Brain microvascular endothelial cell (primary cell): ENCODE measurements at regions of chr7 and their contacts with region 1.

Region 1: GRCh38 chr7:123865517-123866117 is 20.6 kb downstream of the HYAL4 start:
- DNase-seq: peak; percentile 76
- H3K4me3 ChIP-seq: no peak overlapping the region
- H3K27ac ChIP-seq: peak overlapping the region; percentile 21
- H3K27me3 ChIP-seq: no peaks in the 10 kb centered on the region
- CTCF ChIP-seq: peak; percentile 68

Region 2: GRCh38 chr7:123624527-123625183 is 241.0 kb before region 1 on chr7:
- in situ Hi-C with region 1: loop called (anchors 25 kb)
- DNase-seq: no peak
- H3K4me3 ChIP-seq: no peak overlapping the region
- H3K27ac ChIP-seq: no peak overlapping the region
- H3K27me3 ChIP-seq: no peaks in the 10 kb centered on the region
- CTCF ChIP-seq: peak; percentile 74

Region 3: GRCh38 chr7:123666492-123666891 is 199.1 kb before region 1 on chr7:
- in situ Hi-C with region 1: no loop called
- DNase-seq: no peak
- H3K4me3 ChIP-seq: no peak overlapping the region
- H3K27ac ChIP-seq: no peak overlapping the region
- H3K27me3 ChIP-seq: no peaks in the 10 kb centered on the region
- CTCF ChIP-seq: no peak